ENCODE measurements at regions of chr5 and their contacts with region 1.

Region 1: GRCh38 chr5:42970636-42971559 is 69.2 kb downstream of the ANXA2R start:
- DNase-seq: no peak
- H3K4me3 ChIP-seq: no peak overlapping the region
- H3K27ac ChIP-seq: no peak overlapping the region
- H3K4me1 ChIP-seq: no peaks in the 10 kb centered on the region
- CTCF ChIP-seq: 0 out of 2 replicates have a peak, but pooled peaks have one; percentile 16

Region 2: GRCh38 chr5:42950440-42951292 is 20.2 kb before region 1 on chr5:
- CTCF ChIA-PET with region 1: no interaction called
- POLR2A ChIA-PET with region 1: interaction called, 10 read pairs
- intact Hi-C with region 1: no loop called
- DNase-seq: peak; percentile 36
- H3K4me3 ChIP-seq: peak overlapping the region; percentile 68
- H3K27ac ChIP-seq: no peak overlapping the region
- H3K4me1 ChIP-seq: peaks cover 28% of the 10 kb centered on the region
- CTCF ChIP-seq: no peak

Measured in OCI-LY7 (cell line).